Endothelial cell of umbilical vein (primary cell): ENCODE measurements at regions of chr16 and their contacts with region 1.

Region 1: DNA sequence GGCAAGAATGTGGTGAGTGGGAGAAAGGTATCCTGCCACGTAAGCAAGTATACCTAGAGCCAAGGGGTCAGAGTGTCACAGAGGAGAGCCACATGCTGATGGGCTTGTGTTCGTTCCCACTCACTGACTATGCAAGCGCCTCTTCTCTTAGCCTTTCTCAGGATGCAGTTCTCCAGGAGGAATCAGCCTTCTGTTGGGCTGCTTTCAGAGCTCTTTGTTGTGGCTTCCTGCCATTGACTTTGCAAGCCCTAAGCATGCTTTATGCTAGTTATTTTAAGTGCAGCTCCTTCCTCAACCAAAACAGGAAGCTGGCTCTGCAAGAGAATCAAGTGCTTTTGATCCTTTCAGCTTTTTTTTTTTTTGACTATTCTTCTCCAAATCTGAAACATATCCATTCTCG is 66.6 kb downstream of the SIAH1 start:
- DNase-seq: peak; percentile 86
- H3K4me3 ChIP-seq: no peak overlapping the region
- H3K27ac ChIP-seq: peak overlapping the region; percentile 15
- H3K4me1 ChIP-seq: peaks cover 22% of the 10 kb centered on the region
- H3K27me3 ChIP-seq: no peaks in the 10 kb centered on the region
- CTCF ChIP-seq: no peak
- POLR2A ChIP-seq: no peak

Region 2: GRCh38 chr16:48231727-48232492 is 86.7 kb before region 1 on chr16:
- CTCF ChIA-PET with region 1: interaction called, 14 read pairs
- POLR2A ChIA-PET with region 1: no interaction called
- dilution Hi-C with region 1: no loop called
- intact Hi-C with region 1: loop called (anchors 2 kb)
- DNase-seq: peak; percentile 53
- H3K4me3 ChIP-seq: no peak overlapping the region
- H3K27ac ChIP-seq: no peak overlapping the region
- H3K4me1 ChIP-seq: no peaks in the 10 kb centered on the region
- H3K27me3 ChIP-seq: peaks cover 0 to 2% of the 10 kb centered on the region in 2 experiments
- CTCF ChIP-seq: peak; percentile 35 to 67
- POLR2A ChIP-seq: no peak

Region 3: DNA sequence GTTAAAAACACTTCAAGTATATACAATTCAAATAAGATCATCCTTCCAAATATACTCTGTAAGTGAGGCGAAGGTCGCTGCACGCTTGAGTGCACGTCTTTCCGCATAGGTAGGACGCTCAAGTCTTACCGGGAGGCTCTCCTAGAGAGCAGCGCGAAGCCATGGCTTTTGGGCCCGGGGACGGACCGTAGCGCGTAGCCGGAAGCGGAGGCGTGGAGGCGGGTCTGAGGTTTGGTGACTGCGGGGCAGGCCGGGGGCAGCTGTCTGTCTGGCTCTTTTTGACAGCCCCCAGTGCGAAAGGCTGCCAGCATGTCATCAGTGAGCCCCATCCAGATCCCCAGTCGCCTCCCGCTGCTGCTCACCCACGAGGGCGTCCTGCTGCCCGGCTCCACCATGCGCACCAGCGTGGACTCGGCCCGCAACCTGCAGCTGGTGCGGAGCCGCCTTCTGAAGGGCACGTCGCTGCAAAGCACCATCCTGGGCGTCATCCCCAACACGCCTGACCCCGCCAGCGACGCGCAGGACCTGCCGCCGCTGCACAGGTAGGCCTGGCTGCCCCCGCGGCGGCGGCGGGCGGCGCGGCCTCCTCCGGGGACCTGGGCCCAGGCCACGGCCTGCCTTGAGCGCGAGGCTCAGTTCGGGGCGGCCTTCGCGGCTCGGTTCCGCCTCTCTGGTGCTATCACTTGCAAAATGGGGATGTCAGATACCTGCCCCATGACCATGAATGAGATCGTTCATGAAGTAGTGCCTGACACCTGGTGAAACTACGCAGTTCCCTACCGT is 74.4 kb before region 1 on chr16 and contains the start of gene LONP2:
- CTCF ChIA-PET with region 1: no interaction called
- POLR2A ChIA-PET with region 1: no interaction called
- dilution Hi-C with region 1: no loop called
- intact Hi-C with region 1: loop called (anchors 1 kb)
- DNase-seq: peak; percentile 93
- H3K4me3 ChIP-seq: peak within 1 kb of the TSS; percentile 51 to 96 (median 70)
- H3K27ac ChIP-seq: peak within 1 kb of the TSS; percentile 59
- H3K4me1 ChIP-seq: peaks cover 9% of the 10 kb centered on the region
- H3K27me3 ChIP-seq: no peaks in the 10 kb centered on the region
- CTCF ChIP-seq: no peak
- POLR2A ChIP-seq: peak; percentile 77
- total RNA-seq, gene LONP2: 35.5 and 38.4 TPM in 2 replicates

Region 4: DNA sequence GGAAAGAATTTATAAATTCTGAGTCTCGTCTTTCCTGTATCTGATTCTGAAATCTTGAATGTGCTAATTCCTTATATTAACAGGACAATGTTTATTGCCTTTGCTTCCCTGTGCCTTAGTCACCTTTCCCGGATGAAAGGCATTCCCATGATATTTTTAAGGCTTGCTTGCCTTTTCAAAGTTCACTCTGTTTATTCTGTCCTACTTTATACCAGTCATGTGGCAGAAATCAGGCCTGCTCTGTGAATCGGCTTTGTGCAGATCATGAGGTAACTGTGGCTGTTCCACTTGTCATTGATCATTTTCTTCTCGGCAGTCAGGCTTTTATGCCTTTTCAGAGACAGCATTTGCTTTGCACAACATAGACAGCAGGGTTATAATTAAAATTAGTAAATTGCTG is 42.5 kb before region 1 on chr16:
- CTCF ChIA-PET with region 1: interaction called, 6 read pairs
- POLR2A ChIA-PET with region 1: no interaction called
- dilution Hi-C with region 1: no loop called
- intact Hi-C with region 1: loop called (anchors 5 kb)
- DNase-seq: peak; percentile 86
- H3K4me3 ChIP-seq: no peak overlapping the region
- H3K27ac ChIP-seq: peak overlapping the region; percentile 6
- H3K4me1 ChIP-seq: peaks cover 39% of the 10 kb centered on the region
- H3K27me3 ChIP-seq: no peaks in the 10 kb centered on the region
- CTCF ChIP-seq: no peak
- POLR2A ChIP-seq: no peak